ENCODE measurements at regions of chr6 and their contacts with region 1.

Region 1: DNA sequence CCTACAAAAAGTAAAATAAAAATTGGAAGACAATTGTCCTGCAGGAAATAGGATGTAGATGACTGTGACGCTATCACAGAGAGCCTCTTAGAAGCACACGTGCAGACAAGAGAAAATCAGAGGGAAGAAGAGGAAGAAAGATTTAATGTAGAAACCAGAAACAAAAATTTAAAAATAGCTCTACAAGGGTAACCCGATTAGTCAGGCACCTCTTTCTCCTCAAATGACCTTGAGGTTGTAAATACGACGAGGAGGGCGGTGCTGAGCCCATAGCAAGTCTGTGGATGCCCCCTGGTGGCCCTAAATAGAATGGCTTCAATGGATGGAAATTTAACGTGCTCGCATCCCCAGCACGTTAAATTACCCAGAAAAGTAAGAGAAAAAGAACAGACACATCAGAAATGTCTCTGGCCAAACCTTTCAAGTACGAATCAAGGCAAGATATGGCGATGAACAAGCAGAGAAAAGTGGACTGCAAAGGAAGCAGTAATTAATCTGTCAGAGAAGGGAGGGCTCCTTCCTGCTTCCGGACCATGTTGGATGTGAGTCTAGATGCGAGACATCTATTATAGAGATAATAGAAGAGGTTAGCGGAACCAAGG is 4.2 kb upstream of the PRPH2 start:
- DNase-seq: peak; percentile 85
- ATAC-seq: peak; percentile 94
- H3K4me3 Mint-ChIP-seq: peak overlapping the region; percentile 71
- H3K27ac Mint-ChIP-seq: peak overlapping the region; percentile 92
- H3K4me1 Mint-ChIP-seq: peaks cover 19% of the 10 kb centered on the region
- H3K27me3 Mint-ChIP-seq: peaks cover 2% of the 10 kb centered on the region

Region 2: GRCh38 chr6:42661540-42662153 is 64.9 kb before region 1 on chr6:
- CTCF ChIA-PET with region 1: interaction called, 135 read pairs
- POLR2A ChIA-PET with region 1: interaction called, 6 read pairs
- DNase-seq: peak; percentile 90
- ATAC-seq: peak; percentile 84
- H3K4me3 Mint-ChIP-seq: no peak overlapping the region
- H3K27ac Mint-ChIP-seq: no peak overlapping the region
- H3K4me1 Mint-ChIP-seq: peaks cover 2% of the 10 kb centered on the region
- H3K27me3 Mint-ChIP-seq: no peaks in the 10 kb centered on the region

Region 3: DNA sequence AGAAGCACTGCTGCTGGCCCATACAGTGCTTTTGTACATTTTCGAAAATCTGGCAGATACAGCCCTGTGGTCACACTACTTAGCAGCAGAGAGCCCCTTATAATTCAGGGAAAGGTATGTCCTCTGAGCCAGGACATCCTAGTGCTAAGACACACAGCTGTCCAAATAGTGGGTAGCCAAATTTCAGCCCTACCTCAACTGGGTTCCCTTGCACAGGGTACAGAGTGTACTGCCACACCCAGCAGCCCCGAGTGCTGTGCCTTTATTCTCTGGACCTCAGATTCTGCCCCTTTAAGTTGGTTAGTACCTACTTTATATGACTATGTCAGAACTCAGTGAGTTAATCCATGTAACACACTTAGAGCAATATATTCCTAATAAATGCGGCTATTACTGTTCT is 51.8 kb before region 1 on chr6:
- CTCF ChIA-PET with region 1: interaction called, 13 read pairs
- POLR2A ChIA-PET with region 1: no interaction called
- DNase-seq: no peak
- ATAC-seq: no peak
- H3K4me3 Mint-ChIP-seq: no peak overlapping the region
- H3K27ac Mint-ChIP-seq: no peak overlapping the region
- H3K4me1 Mint-ChIP-seq: no peaks in the 10 kb centered on the region
- H3K27me3 Mint-ChIP-seq: no peaks in the 10 kb centered on the region

Region 4: GRCh38 chr6:42692137-42692911 is 34.3 kb before region 1 on chr6:
- CTCF ChIA-PET with region 1: interaction called, 53 read pairs
- POLR2A ChIA-PET with region 1: interaction called, 10 read pairs
- DNase-seq: peak; percentile 25
- ATAC-seq: peak; percentile 35
- H3K4me3 Mint-ChIP-seq: no peak overlapping the region
- H3K27ac Mint-ChIP-seq: peak overlapping the region; percentile 88
- H3K4me1 Mint-ChIP-seq: peaks cover 43% of the 10 kb centered on the region
- H3K27me3 Mint-ChIP-seq: no peaks in the 10 kb centered on the region

Region 5: DNA sequence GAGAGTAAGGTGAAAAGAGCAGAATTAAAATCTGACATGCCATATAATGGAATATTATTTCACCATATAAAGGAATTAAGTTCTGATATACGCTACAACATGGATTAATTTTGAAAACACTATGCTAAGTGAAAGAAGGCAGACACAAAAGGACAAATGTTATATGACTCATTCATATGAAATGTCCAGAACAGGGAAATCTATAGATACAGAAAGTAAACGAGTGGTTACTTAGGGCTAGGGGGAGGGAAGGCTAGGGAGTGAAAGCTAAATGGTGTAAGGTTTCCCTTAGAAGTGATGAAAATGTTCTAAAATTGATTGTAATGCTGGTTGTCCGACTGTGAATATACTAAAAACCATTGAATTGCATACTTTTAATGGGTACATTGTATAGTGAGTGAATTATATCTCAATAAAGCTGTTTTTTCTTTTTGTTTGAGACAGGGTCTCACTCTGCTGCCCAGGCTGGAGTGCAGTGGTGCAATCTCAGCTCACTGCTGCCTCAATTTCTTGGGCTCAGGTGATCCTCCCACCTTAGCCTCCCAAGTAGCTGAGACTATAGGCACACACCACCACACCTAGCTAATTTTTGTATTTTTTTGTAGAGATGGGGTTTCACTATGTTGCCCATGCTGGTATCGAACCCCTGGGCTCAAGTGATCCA is 12.4 kb before region 1 on chr6:
- CTCF ChIA-PET with region 1: interaction called, 12 read pairs
- POLR2A ChIA-PET with region 1: interaction called, 3 read pairs
- DNase-seq: no peak
- ATAC-seq: no peak
- H3K4me3 Mint-ChIP-seq: no peak overlapping the region
- H3K27ac Mint-ChIP-seq: no peak overlapping the region
- H3K4me1 Mint-ChIP-seq: no peaks in the 10 kb centered on the region
- H3K27me3 Mint-ChIP-seq: no peaks in the 10 kb centered on the region

Region 6: GRCh38 chr6:42771741-42772100 is 45.1 kb after region 1 on chr6:
- CTCF ChIA-PET with region 1: interaction called, 11 read pairs
- POLR2A ChIA-PET with region 1: no interaction called
- DNase-seq: peak; percentile 33
- ATAC-seq: peak; percentile 27
- H3K4me3 Mint-ChIP-seq: peak overlapping the region; percentile 72
- H3K27ac Mint-ChIP-seq: peak overlapping the region; percentile 100
- H3K4me1 Mint-ChIP-seq: peaks cover 51% of the 10 kb centered on the region
- H3K27me3 Mint-ChIP-seq: no peaks in the 10 kb centered on the region

Region 7: DNA sequence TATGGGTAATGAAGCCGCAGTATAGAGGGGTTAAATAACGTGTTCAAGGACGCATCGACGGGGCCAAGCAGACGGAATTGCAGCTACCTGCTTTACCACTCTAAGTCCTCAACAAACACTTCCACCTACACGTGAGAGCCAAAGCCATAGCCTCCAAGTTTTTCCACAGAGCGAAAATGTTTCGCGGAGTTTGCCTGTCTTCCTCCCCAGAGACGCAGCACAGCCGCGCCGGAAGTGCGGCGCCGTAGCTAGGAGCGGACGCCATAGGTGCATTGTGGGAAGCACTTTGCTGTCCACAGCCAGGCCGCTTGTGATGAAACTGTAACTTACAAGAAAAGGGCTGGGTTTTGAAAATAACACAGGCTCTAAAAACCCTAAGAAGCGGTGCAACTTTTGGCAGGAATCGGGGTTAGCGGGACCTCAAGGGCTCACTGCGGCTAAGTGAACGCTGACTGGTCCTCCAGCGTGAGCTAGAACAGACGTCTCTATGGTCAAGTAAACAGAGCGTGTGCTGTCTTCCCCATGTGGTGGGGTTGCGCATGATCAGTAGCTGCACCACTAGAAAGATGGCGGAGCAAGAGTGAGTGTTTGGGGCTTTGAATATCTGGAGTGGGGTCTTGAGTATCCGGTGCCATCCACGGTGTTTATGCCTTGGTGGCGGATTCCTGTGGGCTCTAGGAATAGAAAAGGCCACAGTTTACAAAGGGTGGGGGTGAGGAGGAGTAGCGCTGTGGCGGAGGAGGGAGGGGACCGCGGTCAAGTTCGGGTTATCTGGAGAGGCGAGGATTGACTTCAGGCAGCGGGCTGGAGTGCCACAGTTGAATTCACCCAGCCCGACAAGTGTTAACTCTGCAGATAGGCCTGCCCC is 153.0 kb after region 1 on chr6 and contains the start of gene RPL7L1:
- CTCF ChIA-PET with region 1: interaction called, 40 read pairs
- POLR2A ChIA-PET with region 1: interaction called, 14 read pairs
- DNase-seq: peak; percentile 90
- ATAC-seq: peak; percentile 96
- H3K4me3 Mint-ChIP-seq: peak within 1 kb of the TSS; percentile 100
- H3K27ac Mint-ChIP-seq: peak within 1 kb of the TSS; percentile 100
- H3K4me1 Mint-ChIP-seq: peaks cover 25% of the 10 kb centered on the region
- H3K27me3 Mint-ChIP-seq: no peaks in the 10 kb centered on the region
- total RNA-seq, gene RPL7L1: 74.1 to 77.9 TPM

Measured in activated CD8-positive, alpha-beta T cell treated with anti-CD3 and anti-CD28 coated beads, Interleukin-2, amount 10 ng/mL, durations not matched to agents 7 days and 5 days (primary cell).